A673 (cell line): ENCODE measurements at regions of chr17 and their contacts with region 1.

Region 1: GRCh38 chr17:45021607-45022287 is 29.7 kb downstream of the DCAKD start:
- DNase-seq: peak; percentile 60
- H3K4me3 ChIP-seq: peak overlapping the region; percentile 36
- H3K27ac ChIP-seq: no peak overlapping the region
- H3K4me1 ChIP-seq: no peaks in the 10 kb centered on the region
- H3K27me3 ChIP-seq: no peaks in the 10 kb centered on the region
- CTCF ChIP-seq: peak; percentile 55; the same call in 1 of the 2 replicates

Region 2: DNA sequence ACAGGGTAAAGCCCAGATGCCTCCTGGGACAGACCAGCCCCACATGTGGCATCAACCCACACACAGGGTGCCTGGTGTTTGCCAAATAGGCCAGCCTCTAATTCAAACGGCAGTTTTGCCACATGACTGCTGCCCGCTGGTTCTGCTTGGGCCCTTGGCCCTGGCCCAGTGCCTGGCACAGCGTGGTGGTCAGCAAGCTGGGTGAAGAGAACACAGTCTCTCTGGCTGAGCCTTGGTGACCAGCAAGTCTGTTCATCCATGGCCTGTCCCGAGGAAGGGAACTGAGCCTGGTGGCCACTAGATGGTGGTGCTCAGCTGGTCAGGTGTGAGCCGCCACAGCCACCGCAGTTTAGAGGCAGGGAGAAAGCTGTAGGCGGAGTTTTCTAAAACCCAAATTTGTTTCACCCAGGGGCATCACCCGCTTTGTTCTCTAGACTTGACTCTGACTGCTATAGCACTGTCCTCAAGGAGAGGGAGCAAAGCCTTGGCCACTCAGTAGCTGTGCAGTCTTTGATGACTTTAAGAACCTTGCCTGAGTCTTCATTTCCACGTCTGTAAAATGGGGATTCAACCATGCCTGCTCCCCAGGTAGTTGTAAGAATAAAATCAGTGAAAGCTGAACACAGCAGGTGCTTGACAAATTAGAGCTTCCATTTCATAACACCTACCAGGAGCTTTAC is 101.7 kb before region 1 on chr17:
- CTCF ChIA-PET with region 1: interaction called, 13 read pairs
- POLR2A ChIA-PET with region 1: interaction called, 3 read pairs
- intact Hi-C with region 1: loop called (anchors 2 kb)
- DNase-seq: peak; percentile 66
- H3K4me3 ChIP-seq: no peak overlapping the region
- H3K27ac ChIP-seq: no peak overlapping the region
- H3K4me1 ChIP-seq: no peaks in the 10 kb centered on the region
- H3K27me3 ChIP-seq: no peaks in the 10 kb centered on the region
- CTCF ChIP-seq: peak; percentile 66

Region 3: DNA sequence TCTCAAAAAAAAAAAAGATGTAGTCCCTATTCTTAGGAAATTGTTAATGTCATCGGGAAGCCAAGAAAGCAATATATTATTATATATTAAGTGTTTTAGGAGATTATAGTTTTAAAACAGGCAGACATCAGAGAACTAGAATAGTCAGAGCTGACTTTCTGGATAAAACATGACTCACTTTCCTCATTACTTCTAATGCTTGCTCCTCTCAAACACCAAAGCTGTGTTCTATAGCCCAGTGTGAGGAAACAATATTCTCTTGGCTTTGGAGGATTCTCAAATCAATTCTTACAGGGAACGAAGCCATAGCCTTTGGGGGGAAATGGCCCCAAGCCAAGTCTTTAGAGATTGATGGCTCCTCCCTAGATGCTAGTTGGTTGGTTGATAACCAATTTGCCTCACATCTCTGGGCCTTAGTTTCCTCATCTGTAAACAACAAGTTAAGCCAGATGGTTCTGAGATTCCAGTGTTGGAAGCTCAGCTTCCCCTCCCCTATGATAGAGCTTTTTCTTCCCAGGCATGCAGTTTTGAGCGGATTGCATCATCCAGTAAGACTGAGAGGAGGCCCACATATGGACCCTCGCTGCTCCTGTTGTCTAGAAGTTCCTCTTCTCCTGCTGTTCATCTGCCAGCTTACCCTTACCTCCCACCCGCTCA is 51.8 kb after region 1 on chr17:
- CTCF ChIA-PET with region 1: no interaction called
- POLR2A ChIA-PET with region 1: no interaction called
- intact Hi-C with region 1: no loop called
- DNase-seq: peak; percentile 40
- H3K4me3 ChIP-seq: no peak overlapping the region
- H3K27ac ChIP-seq: peak overlapping the region; percentile 80
- H3K4me1 ChIP-seq: peaks cover 9% of the 10 kb centered on the region
- H3K27me3 ChIP-seq: no peaks in the 10 kb centered on the region
- CTCF ChIP-seq: no peak

Region 4: DNA sequence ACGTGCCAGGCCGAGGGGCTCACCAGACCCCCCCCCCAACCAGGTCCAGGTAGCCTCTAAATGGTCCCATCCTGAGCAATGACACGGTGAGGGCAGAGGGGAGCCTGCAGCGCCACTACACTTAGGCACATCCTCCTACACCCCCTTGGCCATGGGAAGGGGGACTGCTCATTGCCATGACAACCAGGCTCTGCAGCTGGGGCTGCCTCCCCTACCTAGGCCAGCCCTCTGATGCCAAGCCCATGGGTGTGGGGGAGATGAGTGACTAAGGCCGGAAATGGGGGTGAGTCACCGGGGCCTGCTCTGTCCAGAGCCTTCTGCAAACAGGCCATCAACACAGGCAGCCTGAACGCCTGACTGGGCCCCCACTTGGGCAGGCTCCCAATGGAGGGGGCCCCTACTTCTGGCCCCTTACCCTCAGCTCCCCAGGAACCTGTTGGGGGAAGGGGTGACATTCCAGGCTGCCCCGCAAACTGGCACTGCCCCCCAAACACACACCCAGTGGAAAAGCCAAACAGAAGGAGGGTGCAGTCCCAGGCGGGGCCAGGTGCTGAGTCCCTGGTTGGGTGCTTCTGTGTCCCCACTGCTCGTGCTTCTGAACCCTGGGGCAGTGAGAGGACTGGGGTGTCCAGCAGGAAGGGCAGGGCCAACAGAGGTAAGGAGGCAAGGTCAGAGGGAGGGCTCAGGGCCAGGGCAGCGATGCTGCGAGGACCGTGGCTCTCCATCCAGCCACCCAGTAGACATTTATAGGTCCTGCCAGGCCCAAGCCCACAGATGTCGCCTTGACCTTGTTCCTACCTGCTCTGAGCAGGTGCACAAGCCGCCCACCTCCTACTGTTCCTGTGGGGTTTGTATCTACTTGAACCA is 102.4 kb after region 1 on chr17:
- CTCF ChIA-PET with region 1: no interaction called
- POLR2A ChIA-PET with region 1: no interaction called
- intact Hi-C with region 1: no loop called
- DNase-seq: peak; percentile 42
- H3K4me3 ChIP-seq: no peak overlapping the region
- H3K27ac ChIP-seq: no peak overlapping the region
- H3K4me1 ChIP-seq: no peaks in the 10 kb centered on the region
- H3K27me3 ChIP-seq: no peaks in the 10 kb centered on the region
- CTCF ChIP-seq: no peak